A549 (cell line): ENCODE measurements at regions of chr11 and their contacts with region 1.

Region 1: GRCh38 chr11:124875943-124876817 is 10.9 kb downstream of the ROBO3 start:
- DNase-seq: peak; percentile 76 to 90
- ATAC-seq: peak; percentile 91 to 97
- H3K4me3 ChIP-seq: peak overlapping the region; percentile 61
- H3K27ac ChIP-seq: peak overlapping the region; percentile 92 to 94
- H3K4me1 ChIP-seq: peaks cover 6% of the 10 kb centered on the region; the same call in 1 of the 3 replicates
- CTCF ChIP-seq: peak; percentile 65
- EP300 ChIP-seq: no peak
- POLR2A ChIP-seq: peak; percentile 49
- RAD21 ChIP-seq: peak; percentile 17 to 45; a peak in 3 of 5 replicates

Region 2: GRCh38 chr11:124865921-124866583 is 10.1 kb before region 1 on chr11:
- CTCF ChIA-PET with region 1: interaction called, 38 read pairs
- POLR2A ChIA-PET with region 1: interaction called, 5 read pairs
- DNase-seq: peak in 1 of 2 experiments; percentile 64
- ATAC-seq: peak; percentile 30 to 75; a peak in 3 of 6 replicates
- H3K4me3 ChIP-seq: peak overlapping the region; percentile 40
- H3K27ac ChIP-seq: no peak overlapping the region
- H3K4me1 ChIP-seq: peaks cover 14% of the 10 kb centered on the region; the same call in 2 of the 3 replicates
- CTCF ChIP-seq: peak; percentile 61
- EP300 ChIP-seq: no peak
- POLR2A ChIP-seq: no peak
- RAD21 ChIP-seq: peak; percentile 22 to 27; a peak in 1 of 5 replicates

Region 3: DNA sequence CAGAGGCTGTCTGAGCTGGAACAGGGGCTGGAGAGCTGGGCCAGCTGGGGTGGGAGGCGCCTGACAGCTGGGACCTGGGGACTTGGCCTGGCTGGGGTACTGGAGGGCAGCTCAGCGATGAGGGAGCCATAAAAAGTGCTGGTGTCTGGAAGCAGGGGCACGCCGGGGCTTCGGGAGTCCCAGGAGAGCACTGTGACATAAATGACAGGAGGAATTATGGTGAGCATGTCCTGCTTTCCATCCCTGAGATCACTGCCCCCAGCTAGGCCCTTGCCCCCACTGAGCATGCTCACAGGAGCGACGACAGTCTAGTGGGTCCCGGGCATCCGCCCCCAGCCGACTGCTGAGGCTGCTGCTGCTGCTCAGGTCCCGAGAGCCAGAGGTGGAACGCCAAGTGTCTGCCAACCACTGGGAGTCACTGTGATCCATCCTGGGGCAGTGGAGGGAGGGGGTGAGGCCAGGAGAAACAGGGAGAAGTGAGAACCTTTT is 15.2 kb after region 1 on chr11:
- CTCF ChIA-PET with region 1: interaction called, 8 read pairs
- POLR2A ChIA-PET with region 1: interaction called, 24 read pairs
- DNase-seq: no peak
- ATAC-seq: peak in 1 of 2 experiments; percentile 41; a peak in 2 of 6 replicates
- H3K4me3 ChIP-seq: no peak overlapping the region
- H3K27ac ChIP-seq: no peak overlapping the region
- H3K4me1 ChIP-seq: no peaks in the 10 kb centered on the region
- CTCF ChIP-seq: no peak
- EP300 ChIP-seq: no peak
- POLR2A ChIP-seq: no peak
- RAD21 ChIP-seq: no peak

Region 4: GRCh38 chr11:124900464-124900863 is 24.3 kb after region 1 on chr11:
- CTCF ChIA-PET with region 1: interaction called, 23 read pairs
- POLR2A ChIA-PET with region 1: interaction called, 24 read pairs
- DNase-seq: peak; percentile 41 to 49
- ATAC-seq: peak; percentile 60 to 82; a peak in 5 of 6 replicates
- H3K4me3 ChIP-seq: no peak overlapping the region
- H3K27ac ChIP-seq: peak overlapping the region in 1 of 2 experiments; percentile 70; a peak in 3 of 6 replicates
- H3K4me1 ChIP-seq: peaks cover 25% of the 10 kb centered on the region
- CTCF ChIP-seq: no peak
- EP300 ChIP-seq: no peak
- POLR2A ChIP-seq: no peak
- RAD21 ChIP-seq: no peak

Region 5: DNA sequence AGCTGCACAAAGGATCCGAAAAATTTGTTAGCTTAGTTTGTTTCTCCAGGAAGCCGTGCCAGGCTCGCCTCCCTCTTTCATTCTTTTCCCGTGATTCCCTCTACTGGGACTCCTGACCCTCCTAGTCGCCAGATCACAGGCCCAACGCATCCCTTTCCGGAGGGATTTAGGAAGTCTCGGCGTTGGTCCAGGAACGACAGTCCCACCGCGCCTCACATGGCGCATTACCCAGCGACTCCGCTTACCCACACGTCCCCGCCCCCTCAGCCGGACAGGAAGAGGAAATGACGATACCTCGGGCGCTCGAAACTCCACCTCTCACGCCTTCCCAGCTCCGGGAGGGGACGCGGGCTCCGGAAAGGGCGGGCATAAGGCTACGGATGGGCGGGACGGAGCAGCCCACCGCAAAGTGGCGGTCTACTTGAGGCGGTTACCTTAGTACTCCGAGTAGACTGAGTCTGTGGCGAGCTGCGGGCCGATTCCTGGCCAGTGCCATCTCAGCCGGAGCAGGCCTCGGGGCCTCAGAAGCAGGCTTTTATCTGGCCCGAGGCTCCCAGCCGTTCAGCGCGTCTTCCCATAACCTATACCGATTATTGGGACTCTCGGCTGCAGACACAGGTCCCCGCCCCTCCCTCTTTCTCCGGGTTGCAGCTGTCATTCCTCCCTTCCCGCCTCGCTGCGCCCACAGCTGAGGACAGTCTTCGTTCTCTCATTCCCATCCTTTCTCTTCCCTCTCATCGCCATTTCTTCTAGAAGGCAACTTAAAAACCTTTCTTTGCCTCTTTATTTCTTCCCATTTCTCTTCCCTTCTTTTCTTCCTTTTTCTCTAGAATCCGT is 77.8 kb after region 1 on chr11 and contains the start of gene CCDC15:
- CTCF ChIA-PET with region 1: interaction called, 14 read pairs
- POLR2A ChIA-PET with region 1: interaction called, 35 read pairs
- DNase-seq: peak; percentile 81 to 94
- ATAC-seq: peak; percentile 100
- H3K4me3 ChIP-seq: peak within 1 kb of the TSS; percentile 76
- H3K27ac ChIP-seq: peak within 1 kb of the TSS; percentile 89
- H3K4me1 ChIP-seq: peaks cover 5% of the 10 kb centered on the region; the same call in 1 of the 3 replicates
- CTCF ChIP-seq: no peak
- EP300 ChIP-seq: no peak
- POLR2A ChIP-seq: peak; percentile 86
- RAD21 ChIP-seq: no peak
- polyA plus RNA-seq, gene CCDC15: 1.1 and 1.3 TPM in 2 replicates

Region 6: GRCh38 chr11:125001079-125001778 is 125.0 kb after region 1 on chr11:
- CTCF ChIA-PET with region 1: no interaction called
- POLR2A ChIA-PET with region 1: no interaction called
- DNase-seq: no peak
- ATAC-seq: no peak
- H3K4me3 ChIP-seq: no peak overlapping the region
- H3K27ac ChIP-seq: no peak overlapping the region
- H3K4me1 ChIP-seq: no peaks in the 10 kb centered on the region
- CTCF ChIP-seq: no peak
- EP300 ChIP-seq: no peak
- POLR2A ChIP-seq: no peak
- RAD21 ChIP-seq: no peak

Region 7: DNA sequence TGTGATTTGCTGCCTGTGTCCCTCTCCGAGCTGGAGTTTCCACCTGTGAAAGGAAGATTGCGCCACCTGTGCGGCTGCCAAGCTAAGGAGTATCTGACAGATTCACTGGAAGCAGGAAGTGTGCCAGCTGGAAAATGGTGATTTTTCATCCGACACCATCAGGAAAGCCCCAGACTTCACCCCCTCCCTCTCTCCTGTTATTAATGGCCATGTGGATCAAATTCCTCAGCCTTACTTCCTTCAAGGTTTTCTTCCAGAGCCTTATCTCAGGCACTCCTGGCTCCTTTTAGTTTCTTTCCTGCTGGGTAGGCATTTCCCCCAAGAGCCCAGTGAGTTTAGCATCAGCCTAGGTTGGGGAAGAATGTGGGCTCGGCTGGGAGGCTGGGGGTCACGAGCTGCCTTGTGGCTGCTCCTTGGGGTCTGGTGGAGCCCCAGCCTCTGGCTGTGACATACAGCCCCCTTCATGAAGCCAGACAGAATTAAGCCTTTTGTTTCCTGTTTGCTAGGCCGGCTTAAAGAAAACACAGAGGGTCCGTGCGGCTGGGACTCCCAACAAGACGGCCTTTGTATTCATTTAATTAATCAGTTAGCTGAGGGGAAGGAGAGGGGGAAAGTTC is 325.5 kb after region 1 on chr11:
- CTCF ChIA-PET with region 1: no interaction called
- POLR2A ChIA-PET with region 1: no interaction called
- DNase-seq: no peak
- ATAC-seq: no peak
- H3K4me3 ChIP-seq: no peak overlapping the region
- H3K27ac ChIP-seq: no peak overlapping the region
- H3K4me1 ChIP-seq: no peaks in the 10 kb centered on the region
- CTCF ChIP-seq: no peak
- EP300 ChIP-seq: no peak
- POLR2A ChIP-seq: no peak
- RAD21 ChIP-seq: no peak